Transverse colon (tissue), 4 donors: ENCODE measurements at regions of chr22 and their contacts with region 1.

Region 1: DNA sequence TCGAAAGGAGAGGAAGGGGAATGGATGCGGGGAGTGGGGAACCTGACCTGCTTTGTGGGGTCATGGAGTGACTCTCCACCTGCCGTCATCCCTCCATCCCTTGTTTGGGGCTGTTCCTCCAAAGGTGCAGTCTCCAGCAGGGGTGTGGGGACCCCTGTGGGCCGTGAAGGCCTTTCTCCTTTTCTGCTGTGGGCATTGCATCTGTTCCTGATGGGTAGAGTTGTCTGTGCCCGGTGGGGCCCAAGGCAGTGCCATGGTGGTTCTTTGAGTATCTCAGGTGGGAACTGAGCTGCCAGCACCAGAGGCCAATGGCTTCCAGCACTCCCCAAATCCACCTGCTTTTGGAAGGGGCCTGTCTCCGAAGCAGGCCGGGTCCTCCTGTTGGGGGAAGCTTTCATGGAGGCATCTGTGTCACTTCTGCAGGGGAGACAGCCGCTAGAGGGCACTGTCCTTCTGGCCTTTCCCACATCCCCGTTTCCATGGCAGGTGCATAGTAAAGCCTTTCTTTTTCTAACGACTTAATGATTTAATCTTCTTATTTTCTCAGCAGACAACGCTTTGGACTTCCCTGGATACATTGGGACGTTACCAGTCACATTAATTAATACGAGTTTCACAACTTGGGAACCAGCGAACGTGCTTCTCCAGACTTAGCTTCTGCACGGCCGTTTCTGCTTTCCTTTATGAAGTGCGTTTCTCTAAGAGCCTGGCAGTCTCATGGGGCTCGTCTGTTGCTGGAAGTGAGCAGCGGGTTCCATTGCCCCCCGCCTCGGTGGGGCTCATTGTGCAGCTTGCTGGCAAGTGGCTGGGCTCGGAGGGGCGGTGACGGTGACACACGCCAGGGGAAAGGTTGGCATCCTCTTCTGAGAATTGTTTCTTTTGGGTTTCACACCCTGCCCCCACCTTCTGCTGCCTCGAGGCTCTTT is 57.1 kb downstream of the PARVB start:
- DNase-seq: peak; percentile 75
- H3K4me3 ChIP-seq: peak overlapping the region in 1 of 4 donors; percentile 24
- H3K27ac ChIP-seq: no peak overlapping the region
- H3K4me1 ChIP-seq: peaks cover 0 to 12% (median 2%) of the 10 kb centered on the region in 4 donors
- H3K27me3 ChIP-seq: no peaks in the 10 kb centered on the region
- CTCF ChIP-seq: peak; percentile 69 to 90 (median 83)
- EP300 ChIP-seq: no peak
- POLR2A ChIP-seq: no peak

Region 2: GRCh38 chr22:43993027-43993760 is 88.0 kb before region 1 on chr22:
- in situ Hi-C with region 1: loop called in 3 of 4 experiments (anchors 5 to 10 kb)
- intact Hi-C with region 1: loop called (anchors 5 kb)
- DNase-seq: peak; percentile 51
- H3K4me3 ChIP-seq: no peak overlapping the region
- H3K27ac ChIP-seq: no peak overlapping the region
- H3K4me1 ChIP-seq: peaks cover 3 to 4% (median 4%) of the 10 kb centered on the region in 4 donors
- H3K27me3 ChIP-seq: no peaks in the 10 kb centered on the region
- CTCF ChIP-seq: peak; percentile 87 to 98 (median 95)
- EP300 ChIP-seq: no peak
- POLR2A ChIP-seq: no peak

Region 3: GRCh38 chr22:44159221-44159620 is 78.0 kb after region 1 on chr22:
- in situ Hi-C with region 1: no loop called
- intact Hi-C with region 1: loop called (anchors 5 kb)
- DNase-seq: peak; percentile 20
- H3K4me3 ChIP-seq: no peak overlapping the region
- H3K27ac ChIP-seq: peak overlapping the region; percentile 37 to 80 (median 74)
- H3K4me1 ChIP-seq: peaks cover 0 to 12% (median 0%) of the 10 kb centered on the region in 4 donors
- H3K27me3 ChIP-seq: no peaks in the 10 kb centered on the region
- CTCF ChIP-seq: no peak
- EP300 ChIP-seq: no peak
- POLR2A ChIP-seq: no peak

Region 4: GRCh38 chr22:44329179-44329796 is 248.1 kb after region 1 on chr22:
- in situ Hi-C with region 1: no loop called
- intact Hi-C with region 1: loop called (anchors 10 kb)
- DNase-seq: peak; percentile 44
- H3K4me3 ChIP-seq: no peak overlapping the region
- H3K27ac ChIP-seq: no peak overlapping the region
- H3K4me1 ChIP-seq: peaks cover 5 to 32% (median 17%) of the 10 kb centered on the region in 4 donors
- H3K27me3 ChIP-seq: peaks cover 68% of the 10 kb centered on the region
- CTCF ChIP-seq: no peak
- EP300 ChIP-seq: no peak
- POLR2A ChIP-seq: no peak

Region 5: DNA sequence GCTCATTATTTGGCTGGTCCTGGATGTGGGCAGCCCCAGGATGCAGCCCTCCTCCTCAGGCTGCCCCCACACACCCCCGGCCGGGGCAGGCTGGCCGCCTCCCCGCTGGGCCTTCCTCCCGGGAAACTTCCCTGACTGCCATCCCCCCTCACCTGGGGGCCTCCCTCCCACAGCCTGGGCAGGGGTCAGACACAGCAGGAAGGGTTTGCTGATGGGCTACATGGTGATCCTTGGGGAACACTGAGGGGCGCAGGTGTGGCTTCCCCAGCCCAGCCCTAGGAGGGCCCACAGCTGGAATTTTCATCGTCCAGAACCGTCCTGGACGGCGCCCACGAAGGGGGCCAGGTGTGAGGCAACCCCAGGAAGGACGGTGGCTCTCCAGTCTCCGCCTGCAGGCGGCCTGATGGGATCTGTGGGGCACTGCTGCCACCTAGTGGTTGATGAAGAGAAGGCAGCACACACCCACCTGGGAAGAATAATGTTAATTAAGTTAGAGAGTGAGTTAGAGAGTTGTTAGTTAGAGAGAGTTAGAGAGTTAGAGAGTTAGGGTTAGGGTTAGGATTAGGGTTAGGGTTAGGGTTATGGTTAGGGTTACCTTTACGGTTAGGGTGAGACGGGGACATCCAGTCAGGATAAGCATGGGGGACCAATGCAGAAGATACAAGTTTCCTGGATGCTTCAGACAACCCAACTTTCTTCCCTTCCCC is 544.9 kb after region 1 on chr22:
- in situ Hi-C with region 1: loop called in 3 of 4 experiments (anchors 10 kb)
- intact Hi-C with region 1: loop called (anchors 5 kb)
- DNase-seq: peak; percentile 76
- H3K4me3 ChIP-seq: no peak overlapping the region
- H3K27ac ChIP-seq: no peak overlapping the region
- H3K4me1 ChIP-seq: no peaks in the 10 kb centered on the region
- H3K27me3 ChIP-seq: peaks cover 3% of the 10 kb centered on the region
- CTCF ChIP-seq: peak; percentile 97 to 100 (median 99)
- EP300 ChIP-seq: no peak
- POLR2A ChIP-seq: no peak